B cell (primary cell): ENCODE measurements at regions of chr9 and their contacts with region 1.

Region 1: GRCh38 chr9:93566408-93567270 is 9.7 kb upstream of the PHF2 start:
- DNase-seq: peak; percentile 97
- ATAC-seq: peak; percentile 99
- H3K4me3 ChIP-seq: peak overlapping the region; percentile 59 to 83 (median 74)
- H3K4me3 Mint-ChIP-seq: peak overlapping the region; percentile 88
- H3K27ac ChIP-seq: peak overlapping the region; percentile 87 to 92
- H3K27ac Mint-ChIP-seq: peak overlapping the region; percentile 93
- H3K4me1 ChIP-seq: peaks cover 21 to 24% of the 10 kb centered on the region in 2 donors
- H3K4me1 Mint-ChIP-seq: peaks cover 28% of the 10 kb centered on the region
- H3K27me3 ChIP-seq: no peaks in the 10 kb centered on the region
- H3K27me3 Mint-ChIP-seq: no peaks in the 10 kb centered on the region
- CTCF ChIP-seq: peak; percentile 96

Region 2: DNA sequence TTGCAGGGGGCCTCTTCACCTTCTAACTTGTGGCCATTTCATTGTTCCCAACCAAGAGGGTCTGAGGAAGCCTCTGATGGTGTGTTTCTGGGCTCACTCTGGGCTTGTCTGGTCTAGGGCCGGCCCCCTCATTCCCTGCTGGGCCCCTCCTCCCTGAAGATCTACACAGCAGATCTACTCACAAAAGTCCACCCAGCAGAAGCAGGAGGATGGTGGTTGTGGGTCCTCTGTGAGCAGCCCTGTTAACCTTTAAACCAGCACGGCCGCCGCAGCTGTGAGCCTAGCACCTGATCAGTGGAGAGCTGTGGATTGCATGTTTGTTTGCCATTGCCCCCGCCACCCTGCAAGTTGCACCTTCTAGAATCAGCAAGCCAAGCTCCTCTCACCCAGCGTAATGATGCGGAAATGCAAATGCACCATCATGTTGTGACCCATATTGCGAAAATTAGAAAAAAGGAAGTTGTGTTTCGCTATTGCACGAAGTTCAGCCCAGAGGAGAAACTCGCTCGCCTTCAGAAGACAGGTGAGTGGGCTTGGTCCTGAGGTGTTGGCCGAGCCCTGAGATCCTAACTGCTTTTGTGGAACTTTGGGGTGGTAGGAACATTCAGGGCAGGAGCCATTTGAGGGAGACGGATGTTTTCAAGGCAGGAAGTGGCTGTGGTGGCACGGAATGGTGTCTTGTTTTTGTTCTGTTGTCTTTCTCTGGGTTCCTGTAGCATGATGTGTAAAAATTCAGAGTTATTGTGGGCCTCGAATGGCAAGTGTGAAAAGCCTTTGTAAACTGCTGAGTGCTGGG is 602.6 kb before region 1 on chr9:
- CTCF ChIA-PET with region 1: no interaction called
- POLR2A ChIA-PET with region 1: no interaction called
- intact Hi-C with region 1: loop called (anchors 5 kb)
- DNase-seq: peak; percentile 88
- ATAC-seq: peak; percentile 80
- H3K4me3 ChIP-seq: peak overlapping the region; percentile 75 to 92 (median 86)
- H3K4me3 Mint-ChIP-seq: peak overlapping the region; percentile 96
- H3K27ac ChIP-seq: peak overlapping the region; percentile 78 to 83
- H3K27ac Mint-ChIP-seq: peak overlapping the region; percentile 98
- H3K4me1 ChIP-seq: peaks cover 58 to 74% of the 10 kb centered on the region in 2 donors
- H3K4me1 Mint-ChIP-seq: peaks cover 75% of the 10 kb centered on the region
- H3K27me3 ChIP-seq: no peaks in the 10 kb centered on the region
- H3K27me3 Mint-ChIP-seq: no peaks in the 10 kb centered on the region
- CTCF ChIP-seq: no peak

Region 3: DNA sequence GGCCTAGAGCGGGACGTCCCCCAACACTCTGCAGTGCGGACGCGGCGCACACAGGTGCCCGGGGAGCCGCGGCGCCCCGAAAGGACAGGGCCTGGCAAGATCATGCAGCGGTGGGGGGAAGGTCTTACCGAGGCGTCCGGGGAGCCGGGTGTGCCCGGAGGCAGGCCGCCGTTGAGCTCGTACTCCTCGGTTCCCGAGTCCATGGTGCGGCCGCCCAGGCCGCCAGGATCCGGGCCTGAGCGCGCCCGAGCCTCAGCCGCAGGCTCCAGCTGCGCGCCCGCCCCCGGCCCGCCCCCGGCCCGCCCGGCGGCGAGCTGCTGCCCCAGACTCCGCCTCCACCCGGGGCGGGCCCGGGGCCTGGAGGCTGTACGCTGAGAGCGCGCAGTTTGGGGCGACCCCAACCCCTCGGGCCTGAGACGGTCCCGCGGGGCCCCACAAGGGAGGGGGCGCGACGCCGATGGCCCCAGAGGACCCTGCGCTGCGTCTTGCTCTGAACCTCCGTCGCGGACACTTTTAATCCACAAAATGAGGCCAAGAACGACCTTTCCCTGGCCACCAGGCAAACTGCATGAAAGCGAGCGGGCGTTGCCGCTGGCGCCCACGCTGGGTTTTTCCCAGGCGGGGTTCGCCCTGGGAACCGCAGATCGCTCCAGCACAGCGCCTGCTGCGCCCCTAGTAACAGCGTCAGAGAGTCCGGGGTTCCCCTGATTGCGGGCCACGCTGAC is 432.5 kb before region 1 on chr9 and contains the start of gene NINJ1:
- CTCF ChIA-PET with region 1: no interaction called
- POLR2A ChIA-PET with region 1: no interaction called
- intact Hi-C with region 1: loop called (anchors 10 kb)
- DNase-seq: peak; percentile 94
- ATAC-seq: peak; percentile 85
- H3K4me3 ChIP-seq: peak within 1 kb of the TSS; percentile 16 to 77 (median 67)
- H3K4me3 Mint-ChIP-seq: peak within 1 kb of the TSS; percentile 90
- H3K27ac ChIP-seq: peak within 1 kb of the TSS; percentile 68 to 76
- H3K27ac Mint-ChIP-seq: peak within 1 kb of the TSS; percentile 84
- H3K4me1 ChIP-seq: peaks cover 25 to 33% of the 10 kb centered on the region in 2 donors
- H3K4me1 Mint-ChIP-seq: peaks cover 43% of the 10 kb centered on the region
- H3K27me3 ChIP-seq: peaks cover 0 to 13% (median 0%) of the 10 kb centered on the region in 4 experiments
- H3K27me3 Mint-ChIP-seq: no peaks in the 10 kb centered on the region
- CTCF ChIP-seq: no peak
- total RNA-seq, gene NINJ1: 7.6 and 8.3 TPM in 2 replicates

Region 4: DNA sequence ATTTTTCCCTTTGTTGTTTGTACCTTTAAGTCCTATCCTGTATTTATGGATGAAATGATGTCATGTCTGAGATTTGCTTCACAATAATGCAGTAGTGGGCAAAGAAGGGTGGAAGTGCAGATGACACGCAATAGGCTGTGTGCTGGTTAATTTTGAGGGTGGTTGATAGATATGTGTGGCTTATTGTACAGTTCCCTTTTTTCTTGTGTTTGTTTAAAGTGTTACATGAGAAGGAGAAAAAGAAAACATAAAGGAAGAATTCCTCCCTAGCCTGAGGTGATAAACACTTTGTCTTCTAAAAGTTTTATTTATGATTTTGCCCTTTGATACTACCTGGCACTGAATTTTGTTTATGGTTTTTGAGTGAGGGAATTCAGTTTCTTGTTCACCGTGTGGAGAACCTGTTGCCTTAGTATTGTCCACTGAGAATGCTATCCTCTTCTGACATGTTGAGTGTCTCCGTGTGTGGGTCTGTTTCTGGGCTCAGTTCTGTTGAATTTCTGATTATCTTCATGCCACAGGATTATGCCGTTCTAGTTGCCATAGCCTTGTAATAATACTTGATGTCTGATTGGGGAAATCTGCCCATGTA is 61.0 kb before region 1 on chr9:
- CTCF ChIA-PET with region 1: interaction called, 5 read pairs
- POLR2A ChIA-PET with region 1: no interaction called
- intact Hi-C with region 1: loop called (anchors 2 kb)
- DNase-seq: peak; percentile 13
- ATAC-seq: no peak
- H3K4me3 ChIP-seq: peak overlapping the region in 1 of 5 experiments; percentile 27
- H3K4me3 Mint-ChIP-seq: peak overlapping the region; percentile 51
- H3K27ac ChIP-seq: peak overlapping the region in 1 of 2 donors; percentile 53
- H3K27ac Mint-ChIP-seq: peak overlapping the region; percentile 83
- H3K4me1 ChIP-seq: peaks cover 34 to 39% of the 10 kb centered on the region in 2 donors
- H3K4me1 Mint-ChIP-seq: peaks cover 64% of the 10 kb centered on the region
- H3K27me3 ChIP-seq: no peaks in the 10 kb centered on the region
- H3K27me3 Mint-ChIP-seq: no peaks in the 10 kb centered on the region
- CTCF ChIP-seq: no peak

Region 5: GRCh38 chr9:93612796-93613154 is 46.1 kb after region 1 on chr9:
- CTCF ChIA-PET with region 1: no interaction called
- POLR2A ChIA-PET with region 1: no interaction called
- intact Hi-C with region 1: no loop called
- DNase-seq: no peak
- ATAC-seq: no peak
- H3K4me3 ChIP-seq: no peak overlapping the region
- H3K4me3 Mint-ChIP-seq: no peak overlapping the region
- H3K27ac ChIP-seq: no peak overlapping the region
- H3K27ac Mint-ChIP-seq: no peak overlapping the region
- H3K4me1 ChIP-seq: peaks cover 7 to 20% of the 10 kb centered on the region in 2 donors
- H3K4me1 Mint-ChIP-seq: peaks cover 21% of the 10 kb centered on the region
- H3K27me3 ChIP-seq: no peaks in the 10 kb centered on the region
- H3K27me3 Mint-ChIP-seq: no peaks in the 10 kb centered on the region
- CTCF ChIP-seq: no peak

Region 6: GRCh38 chr9:94166237-94166963 is 599.8 kb after region 1 on chr9:
- CTCF ChIA-PET with region 1: no interaction called
- POLR2A ChIA-PET with region 1: no interaction called
- intact Hi-C with region 1: loop called (anchors 10 kb)
- DNase-seq: peak; percentile 96
- ATAC-seq: peak; percentile 56
- H3K4me3 ChIP-seq: peak overlapping the region in 4 of 5 experiments; percentile 75 to 86 (median 80)
- H3K4me3 Mint-ChIP-seq: peak overlapping the region; percentile 92
- H3K27ac ChIP-seq: peak overlapping the region; percentile 86 to 99
- H3K27ac Mint-ChIP-seq: peak overlapping the region; percentile 95
- H3K4me1 ChIP-seq: peaks cover 36 to 46% of the 10 kb centered on the region in 2 donors
- H3K4me1 Mint-ChIP-seq: peaks cover 49% of the 10 kb centered on the region
- H3K27me3 ChIP-seq: no peaks in the 10 kb centered on the region
- H3K27me3 Mint-ChIP-seq: no peaks in the 10 kb centered on the region
- CTCF ChIP-seq: no peak